Activated CD4-positive, alpha-beta memory T cell treated with anti-CD3 and anti-CD28 coated beads, Interleukin-2, amount 10 ng/mL, durations not matched to agents 7 days and 5 days (primary cell): ENCODE measurements at regions of chr15 and their contacts with region 1.

Region 1: GRCh38 chr15:34038023-34038870 is 757 bp downstream of the AVEN start:
- DNase-seq: peak; percentile 74
- H3K4me3 Mint-ChIP-seq: peak overlapping the region; percentile 86
- H3K27ac Mint-ChIP-seq: peak overlapping the region; percentile 73
- H3K4me1 Mint-ChIP-seq: peaks cover 24% of the 10 kb centered on the region
- H3K27me3 Mint-ChIP-seq: no peaks in the 10 kb centered on the region

Region 2: GRCh38 chr15:34018021-34018645 is 20.1 kb before region 1 on chr15:
- CTCF ChIA-PET with region 1: no interaction called
- POLR2A ChIA-PET with region 1: interaction called, 14 read pairs
- DNase-seq: peak; percentile 66
- H3K4me3 Mint-ChIP-seq: peak overlapping the region; percentile 47
- H3K27ac Mint-ChIP-seq: peak overlapping the region; percentile 59
- H3K4me1 Mint-ChIP-seq: peaks cover 21% of the 10 kb centered on the region
- H3K27me3 Mint-ChIP-seq: no peaks in the 10 kb centered on the region

Region 3: DNA sequence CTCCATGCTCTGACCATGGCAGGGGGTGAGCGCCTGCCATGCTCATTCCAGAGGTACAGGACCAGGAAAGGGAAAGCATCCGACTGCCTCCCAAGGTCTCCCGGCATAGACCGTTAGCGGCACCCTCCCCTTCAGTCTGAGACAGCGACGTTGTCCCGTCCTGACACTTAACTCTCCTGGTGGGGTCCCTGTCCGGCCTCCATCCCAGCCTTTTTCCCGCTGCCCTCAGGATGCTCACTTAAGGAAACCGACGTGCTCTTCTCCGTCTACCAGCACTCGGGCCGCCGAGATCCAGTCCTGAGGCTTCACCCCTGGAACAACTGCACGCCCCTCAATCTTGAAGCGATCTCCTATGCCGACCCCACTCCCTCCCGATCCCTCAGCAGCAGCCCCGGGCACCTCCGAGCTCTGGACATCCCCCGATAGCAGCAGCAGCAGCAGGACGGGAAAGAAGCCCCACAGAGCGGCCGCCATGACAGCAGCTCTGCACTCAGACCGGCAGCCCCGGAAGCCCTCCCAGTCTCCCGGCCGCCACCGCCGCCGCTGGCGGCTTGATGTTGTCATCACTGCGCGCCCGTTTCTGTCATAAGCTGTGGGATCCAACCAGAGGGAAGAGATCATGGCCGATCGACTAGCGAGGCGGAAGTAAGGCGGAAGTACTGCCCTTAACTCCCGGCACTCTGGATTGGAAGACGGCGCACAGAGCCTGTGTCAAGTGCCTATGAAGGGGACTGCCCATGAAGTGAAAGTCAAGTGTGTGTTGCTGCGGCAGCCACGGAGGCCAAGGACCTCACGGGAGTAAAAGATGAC is 63.3 kb after region 1 on chr15 and contains the starts of genes EMC7 and PGBD4:
- CTCF ChIA-PET with region 1: no interaction called
- POLR2A ChIA-PET with region 1: interaction called, 20 read pairs
- DNase-seq: peak; percentile 100
- H3K4me3 Mint-ChIP-seq: peak within 1 kb of the TSS; percentile 96
- H3K27ac Mint-ChIP-seq: peak within 1 kb of the TSS; percentile 90
- H3K4me1 Mint-ChIP-seq: peaks cover 37% of the 10 kb centered on the region
- H3K27me3 Mint-ChIP-seq: no peaks in the 10 kb centered on the region
- total RNA-seq, gene EMC7: 78.7 to 81.8 TPM
- total RNA-seq, gene PGBD4: 3.1 to 3.3 TPM

Region 4: DNA sequence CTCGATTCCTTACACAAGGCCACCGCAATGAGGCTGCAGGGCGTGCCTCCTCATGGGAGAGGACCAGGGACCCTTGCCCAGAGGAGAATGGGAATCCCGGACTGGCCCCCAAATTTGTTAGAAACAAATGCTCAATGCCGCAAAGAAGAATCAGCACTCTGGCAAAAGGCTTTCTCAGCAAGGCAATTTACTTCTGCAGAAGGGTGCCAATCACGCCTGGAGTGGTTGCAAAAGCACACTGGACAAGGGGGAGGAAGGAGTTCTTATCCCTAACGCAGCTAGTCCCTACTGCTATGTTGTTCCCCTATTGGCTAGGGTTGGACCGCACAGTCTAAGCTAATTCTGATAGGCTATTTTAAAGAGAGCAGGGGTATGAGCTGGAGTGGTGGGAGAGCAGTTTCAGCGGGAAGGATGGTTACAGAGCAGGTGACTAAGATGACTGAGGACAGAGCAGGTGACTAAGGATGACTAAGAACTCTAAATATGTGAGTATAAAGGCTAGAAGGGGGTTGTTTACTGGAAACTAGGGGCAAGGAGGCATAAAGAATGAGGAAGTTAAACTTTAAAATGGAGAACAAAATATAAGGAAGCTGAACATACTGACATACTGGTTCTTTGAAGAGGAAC is 123.2 kb after region 1 on chr15:
- CTCF ChIA-PET with region 1: no interaction called
- POLR2A ChIA-PET with region 1: no interaction called
- DNase-seq: no peak
- H3K4me3 Mint-ChIP-seq: no peak overlapping the region
- H3K27ac Mint-ChIP-seq: no peak overlapping the region
- H3K4me1 Mint-ChIP-seq: no peaks in the 10 kb centered on the region
- H3K27me3 Mint-ChIP-seq: no peaks in the 10 kb centered on the region